AG04450 (cell line): ENCODE measurements at regions of chr6 and their contacts with region 1.

Region 1: GRCh38 chr6:22145823-22146677 is 150.8 kb downstream of the PRL start:
- DNase-seq: peak; percentile 42
- H3K4me3 ChIP-seq: no peak overlapping the region
- H3K27ac ChIP-seq: no peak overlapping the region
- H3K27me3 ChIP-seq: no peaks in the 10 kb centered on the region
- CTCF ChIP-seq: peak; percentile 50

Region 2: GRCh38 chr6:21601932-21602390 is 544.1 kb before region 1 on chr6:
- CTCF ChIA-PET with region 1: interaction called, 6 read pairs
- POLR2A ChIA-PET with region 1: interaction called, 15 read pairs
- DNase-seq: no peak
- H3K4me3 ChIP-seq: no peak overlapping the region
- H3K27ac ChIP-seq: no peak overlapping the region
- H3K27me3 ChIP-seq: no peaks in the 10 kb centered on the region
- CTCF ChIP-seq: no peak

Region 3: DNA sequence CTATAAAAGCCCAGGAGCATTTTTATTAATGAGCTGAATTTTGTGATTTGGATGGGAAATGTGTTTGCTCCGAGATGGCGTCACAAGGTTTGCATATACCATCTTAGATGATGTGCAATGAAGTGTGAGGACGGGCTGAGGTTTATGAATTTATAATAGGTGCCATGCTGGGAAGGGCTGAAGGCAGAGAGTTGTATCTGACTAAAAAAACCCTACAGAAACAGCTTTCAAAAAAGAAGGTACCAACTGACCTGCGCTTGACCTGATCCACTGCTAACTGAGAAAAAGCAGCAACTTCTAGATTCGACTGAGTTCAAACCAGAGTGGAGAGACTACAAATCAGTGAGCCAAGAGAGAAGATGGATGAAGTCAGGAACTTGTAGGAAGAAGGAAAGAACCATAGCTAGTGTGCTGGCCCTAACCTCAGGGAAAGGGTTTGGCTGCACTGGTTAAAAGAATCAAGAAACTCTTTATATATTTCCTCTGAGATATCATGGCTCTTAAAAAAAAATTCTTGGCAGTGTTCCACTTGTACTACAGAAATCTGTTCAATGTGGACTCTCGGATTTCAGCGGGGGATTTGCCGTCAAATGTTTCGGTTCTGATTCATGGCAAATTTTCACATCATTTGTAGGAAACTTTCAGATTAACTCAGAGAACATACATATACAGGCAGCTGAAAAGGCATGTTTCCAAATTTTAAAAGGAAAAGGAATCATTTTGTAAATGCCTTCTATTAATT is 366.8 kb after region 1 on chr6:
- CTCF ChIA-PET with region 1: no interaction called
- POLR2A ChIA-PET with region 1: no interaction called
- DNase-seq: peak; percentile 48
- H3K4me3 ChIP-seq: no peak overlapping the region
- H3K27ac ChIP-seq: no peak overlapping the region
- H3K27me3 ChIP-seq: no peaks in the 10 kb centered on the region
- CTCF ChIP-seq: no peak

Region 4: GRCh38 chr6:22737331-22737730 is 591.3 kb after region 1 on chr6:
- CTCF ChIA-PET with region 1: interaction called, 12 read pairs
- POLR2A ChIA-PET with region 1: interaction called, 3 read pairs
- DNase-seq: no peak
- H3K4me3 ChIP-seq: no peak overlapping the region
- H3K27ac ChIP-seq: no peak overlapping the region
- H3K27me3 ChIP-seq: no peaks in the 10 kb centered on the region
- CTCF ChIP-seq: peak; percentile 71

Region 5: DNA sequence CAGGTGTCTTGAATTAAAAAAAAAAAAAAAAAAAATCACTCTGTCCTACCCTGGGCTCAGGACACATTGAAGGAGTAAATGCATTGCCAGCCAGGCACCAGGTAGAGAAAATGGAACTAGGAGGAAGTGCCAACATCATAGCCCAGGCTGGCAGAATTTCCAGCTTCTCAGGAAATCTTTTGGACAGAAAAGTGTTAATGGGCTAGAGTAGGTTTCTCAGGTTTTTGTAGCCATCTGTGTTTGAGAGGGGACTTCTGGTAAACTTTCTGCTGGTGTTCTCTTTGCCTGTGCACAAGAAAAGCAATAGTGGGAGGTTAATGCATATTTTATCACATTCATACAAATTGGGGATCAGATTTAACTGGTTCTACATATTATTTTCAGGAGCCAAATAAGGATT is 1301.7 kb after region 1 on chr6:
- CTCF ChIA-PET with region 1: interaction called, 10 read pairs
- POLR2A ChIA-PET with region 1: no interaction called
- DNase-seq: no peak
- H3K4me3 ChIP-seq: no peak overlapping the region
- H3K27ac ChIP-seq: no peak overlapping the region
- H3K27me3 ChIP-seq: no peaks in the 10 kb centered on the region
- CTCF ChIP-seq: no peak